ENCODE measurements at regions of chr5 and their contacts with region 1.

Region 1: GRCh38 chr5:80407735-80408482 is at the start of gene ZFYVE16:
- DNase-seq: peak; percentile 99
- ATAC-seq: peak; percentile 98
- total RNA-seq, gene ZFYVE16: 32.8 TPM

Region 2: GRCh38 chr5:80093796-80094195 is 314.1 kb before region 1 on chr5:
- intact Hi-C with region 1: loop called (anchors 10 kb)
- DNase-seq: no peak
- ATAC-seq: no peak

Region 3: GRCh38 chr5:80204808-80205614 is 202.9 kb before region 1 on chr5:
- intact Hi-C with region 1: no loop called
- DNase-seq: no peak
- ATAC-seq: peak; percentile 83

Region 4: DNA sequence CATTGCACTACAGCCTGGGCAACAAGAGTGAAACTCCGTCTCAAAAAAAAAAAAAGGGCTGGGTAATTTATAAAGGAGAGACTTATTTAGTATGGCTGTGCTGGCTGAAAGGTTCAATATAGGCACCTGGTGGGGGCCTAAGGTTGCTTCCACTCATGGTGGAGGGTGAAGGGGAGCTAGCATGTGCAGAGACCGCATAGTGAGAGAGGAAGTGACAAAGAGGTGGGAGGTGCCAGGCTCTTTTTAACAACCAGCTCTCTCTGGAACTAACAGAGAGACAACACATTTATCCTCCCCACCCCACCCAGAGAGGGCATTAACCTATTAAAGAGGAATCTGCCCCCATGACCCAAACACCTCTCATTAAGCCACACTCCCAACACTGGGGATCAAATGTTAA is 123.2 kb before region 1 on chr5:
- intact Hi-C with region 1: no loop called
- DNase-seq: no peak
- ATAC-seq: no peak

Region 5: GRCh38 chr5:80348171-80348570 is 59.7 kb before region 1 on chr5:
- intact Hi-C with region 1: no loop called
- DNase-seq: no peak
- ATAC-seq: no peak

Region 6: GRCh38 chr5:80654391-80655230 is 246.7 kb after region 1 on chr5 and contains the starts of genes DHFR and MSH3:
- intact Hi-C with region 1: loop called (anchors 10 kb)
- DNase-seq: peak; percentile 93
- ATAC-seq: peak; percentile 44
- total RNA-seq, gene DHFR: 11.1 TPM
- total RNA-seq, gene MSH3: 10.4 TPM

Region 7: DNA sequence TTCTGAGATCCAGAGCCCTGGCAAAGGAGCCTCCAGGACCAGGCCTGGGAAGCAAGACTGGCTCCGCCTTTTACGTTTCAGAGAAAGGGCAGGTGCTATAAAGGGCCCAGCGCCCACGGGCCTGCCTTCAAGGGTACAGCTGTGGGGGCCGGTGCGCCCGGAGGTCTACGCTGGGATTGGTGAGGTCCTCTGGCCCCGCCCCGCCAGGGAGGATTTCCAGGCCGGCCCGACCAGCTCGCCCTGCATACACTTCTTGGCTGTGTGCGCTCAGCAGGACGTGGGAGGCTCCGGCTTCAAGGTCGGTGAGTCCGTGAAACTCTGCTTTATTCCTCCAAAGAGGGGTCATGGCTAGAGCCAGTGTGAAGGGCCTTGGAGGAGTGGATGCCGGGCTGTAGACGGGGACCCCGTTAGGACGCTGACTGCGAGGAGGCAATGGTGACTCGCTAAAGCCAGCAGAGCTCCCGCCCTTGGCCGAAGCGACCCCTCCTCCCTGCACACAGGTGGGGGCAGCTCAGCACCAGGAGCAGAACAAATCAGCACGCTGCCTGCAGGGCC is 825.2 kb after region 1 on chr5 and contains the start of gene CKMT2:
- intact Hi-C with region 1: loop called (anchors 2 kb)
- DNase-seq: peak; percentile 91
- ATAC-seq: peak; percentile 85
- total RNA-seq, gene CKMT2: 1,804 TPM

Measured in Right ventricle myocardium inferior (tissue), 1 donor.